ENCODE measurements at regions of chr14 and their contacts with region 1.

Region 1: DNA sequence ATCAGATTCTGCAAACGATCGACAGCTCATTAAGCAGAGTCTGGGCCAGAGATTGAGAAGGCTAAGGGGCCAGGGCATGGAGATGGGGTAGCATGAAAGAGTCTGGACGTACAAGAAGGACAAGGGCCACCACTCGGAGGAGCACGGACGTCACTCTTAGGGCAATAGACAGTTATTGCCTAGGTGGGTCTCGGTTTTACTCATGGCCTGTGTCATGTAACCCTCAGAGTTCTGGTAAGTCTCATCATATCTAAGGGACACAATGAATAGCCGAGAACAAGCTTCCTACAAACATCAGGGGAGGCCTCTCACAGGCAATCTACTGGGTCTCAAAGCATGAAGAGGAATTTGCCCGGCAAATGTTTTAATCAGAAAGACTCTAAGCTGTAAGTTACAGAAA is 30.4 kb upstream of the ITPK1 start:
- DNase-seq: no peak
- ATAC-seq: no peak
- H3K4me3 ChIP-seq: no peak overlapping the region
- H3K27ac ChIP-seq: no peak overlapping the region
- H3K4me1 ChIP-seq: peaks cover 17% of the 10 kb centered on the region
- H3K27me3 ChIP-seq: no peaks in the 10 kb centered on the region
- CTCF ChIP-seq: no peak
- POLR2A ChIP-seq: no peak

Region 2: GRCh38 chr14:92659765-92660561 is 486.2 kb before region 1 on chr14:
- intact Hi-C with region 1: no loop called
- DNase-seq: peak in 3 of 4 donors; percentile 32 to 86 (median 37)
- ATAC-seq: no peak
- H3K4me3 ChIP-seq: no peak overlapping the region
- H3K27ac ChIP-seq: peak overlapping the region in 2 of 4 donors; percentile 4 to 67
- H3K4me1 ChIP-seq: no peaks in the 10 kb centered on the region
- H3K27me3 ChIP-seq: no peaks in the 10 kb centered on the region
- CTCF ChIP-seq: no peak
- POLR2A ChIP-seq: peak in 1 of 3 donors; percentile 14

Region 3: DNA sequence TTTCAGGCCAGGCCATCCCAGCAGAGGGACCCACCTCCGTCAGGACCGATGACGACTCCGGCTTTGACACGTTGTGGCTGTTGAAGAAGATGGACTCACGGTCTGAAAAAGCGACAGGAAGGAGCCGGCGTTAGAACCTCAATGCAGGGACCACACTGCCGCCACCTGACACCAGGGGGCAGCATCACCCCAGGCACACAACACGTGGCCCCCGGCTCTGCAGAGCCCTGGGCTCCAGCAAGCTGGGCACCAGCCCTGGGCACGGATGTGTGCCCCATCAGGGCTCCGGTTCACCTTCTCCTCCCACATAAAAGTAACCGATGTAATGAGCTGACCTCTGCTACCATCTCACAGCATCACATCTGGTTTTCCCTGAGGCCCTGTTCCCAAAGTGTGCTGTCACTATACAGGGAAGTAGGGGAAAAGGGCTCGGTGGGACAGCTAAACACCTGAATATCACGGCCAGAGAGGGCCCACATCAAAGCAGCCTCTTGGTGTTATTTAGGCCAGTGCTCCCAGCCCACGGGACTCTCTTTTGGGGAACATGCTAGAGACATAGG is 194.1 kb before region 1 on chr14:
- intact Hi-C with region 1: loop called (anchors 10 kb)
- DNase-seq: peak; percentile 78 to 88 (median 82)
- ATAC-seq: peak; percentile 90
- H3K4me3 ChIP-seq: no peak overlapping the region
- H3K27ac ChIP-seq: no peak overlapping the region
- H3K4me1 ChIP-seq: no peaks in the 10 kb centered on the region
- H3K27me3 ChIP-seq: no peaks in the 10 kb centered on the region
- CTCF ChIP-seq: peak; percentile 92 to 99 (median 93)
- POLR2A ChIP-seq: no peak

Region 4: GRCh38 chr14:93033983-93034670 is 112.0 kb before region 1 on chr14:
- intact Hi-C with region 1: no loop called
- DNase-seq: no peak
- ATAC-seq: no peak
- H3K4me3 ChIP-seq: no peak overlapping the region
- H3K27ac ChIP-seq: no peak overlapping the region
- H3K4me1 ChIP-seq: peaks cover 35% of the 10 kb centered on the region
- H3K27me3 ChIP-seq: no peaks in the 10 kb centered on the region
- CTCF ChIP-seq: peak in 1 of 7 experiments; percentile 19
- POLR2A ChIP-seq: no peak

Region 5: GRCh38 chr14:93219103-93219726 is 73.1 kb after region 1 on chr14:
- intact Hi-C with region 1: no loop called
- DNase-seq: peak; percentile 62 to 81 (median 72)
- ATAC-seq: no peak
- H3K4me3 ChIP-seq: no peak overlapping the region
- H3K27ac ChIP-seq: no peak overlapping the region
- H3K4me1 ChIP-seq: peaks cover 5% of the 10 kb centered on the region
- H3K27me3 ChIP-seq: no peaks in the 10 kb centered on the region
- CTCF ChIP-seq: peak; percentile 8 to 70 (median 60)
- POLR2A ChIP-seq: no peak